ENCODE measurements at regions of chr5 and their contacts with region 1.

Region 1: DNA sequence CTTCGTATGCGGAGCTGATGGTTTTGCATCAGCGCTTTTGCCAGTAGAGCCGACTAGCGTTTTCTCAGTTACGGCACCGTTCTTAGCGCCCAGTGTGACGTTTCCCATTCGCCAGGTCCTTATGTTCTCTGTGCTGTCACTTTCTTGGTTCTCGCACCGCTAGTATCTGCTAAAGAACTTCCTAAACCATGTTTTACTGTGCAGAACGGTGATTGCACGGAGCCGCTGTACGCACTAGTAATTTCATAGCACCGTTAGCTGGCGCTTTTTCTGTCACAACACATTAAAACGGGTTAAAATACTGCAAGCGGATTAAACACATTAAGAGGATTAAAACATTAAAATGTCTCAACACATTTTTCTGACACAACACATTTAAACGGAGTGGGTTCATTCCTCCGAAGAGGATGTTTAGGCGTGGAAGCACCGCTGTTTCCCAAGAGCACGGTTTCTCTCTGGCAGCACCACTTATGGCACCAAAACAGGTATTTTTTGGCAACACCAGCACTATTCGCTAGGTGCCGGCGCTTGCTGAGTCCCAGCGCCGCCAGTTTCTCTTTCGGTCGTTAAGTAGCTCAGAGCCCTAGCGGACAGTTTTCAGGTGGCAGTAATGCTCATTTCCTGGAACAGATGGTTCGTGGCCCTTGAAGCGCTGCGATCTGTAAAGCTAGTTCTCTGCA is 20.4 kb downstream of the ANXA2R start:
- DNase-seq: peak; percentile 79 to 83
- H3K4me3 ChIP-seq: peak overlapping the region; percentile 74
- H3K4me3 Mint-ChIP-seq: peak overlapping the region; percentile 95
- H3K27ac Mint-ChIP-seq: peak overlapping the region; percentile 89
- H3K4me1 ChIP-seq: no peaks in the 10 kb centered on the region
- H3K4me1 Mint-ChIP-seq: peaks cover 15% of the 10 kb centered on the region
- H3K27me3 ChIP-seq: no peaks in the 10 kb centered on the region
- H3K27me3 Mint-ChIP-seq: no peaks in the 10 kb centered on the region
- CTCF ChIP-seq: peak; percentile 47 to 73

Region 2: GRCh38 chr5:42811591-42812446 is 207.9 kb before region 1 on chr5 and contains the start of gene SELENOP:
- CTCF ChIA-PET with region 1: no interaction called
- POLR2A ChIA-PET with region 1: interaction called, 3 read pairs
- intact Hi-C with region 1: loop called (anchors 10 kb)
- DNase-seq: peak; percentile 76 to 83
- H3K4me3 ChIP-seq: peak within 1 kb of the TSS; percentile 45
- H3K4me3 Mint-ChIP-seq: peak within 1 kb of the TSS; percentile 75
- H3K27ac Mint-ChIP-seq: peak within 1 kb of the TSS; percentile 82
- H3K4me1 ChIP-seq: peaks cover 25% of the 10 kb centered on the region
- H3K4me1 Mint-ChIP-seq: peaks cover 30% of the 10 kb centered on the region
- H3K27me3 ChIP-seq: no peaks in the 10 kb centered on the region
- H3K27me3 Mint-ChIP-seq: no peaks in the 10 kb centered on the region
- CTCF ChIP-seq: no peak
- total RNA-seq, gene SELENOP: 114 and 153 TPM in 2 replicates

Region 3: GRCh38 chr5:42908509-42909488 is 111.0 kb before region 1 on chr5:
- CTCF ChIA-PET with region 1: interaction called, 23 read pairs
- POLR2A ChIA-PET with region 1: interaction called, 3 read pairs
- intact Hi-C with region 1: loop called (anchors 2 kb)
- DNase-seq: peak; percentile 89 to 90
- H3K4me3 ChIP-seq: peak overlapping the region; percentile 38
- H3K4me3 Mint-ChIP-seq: peak overlapping the region; percentile 97
- H3K27ac Mint-ChIP-seq: peak overlapping the region; percentile 64
- H3K4me1 ChIP-seq: peaks cover 5% of the 10 kb centered on the region; the same call in 1 of the 2 replicates
- H3K4me1 Mint-ChIP-seq: no peaks in the 10 kb centered on the region
- H3K27me3 ChIP-seq: no peaks in the 10 kb centered on the region
- H3K27me3 Mint-ChIP-seq: peaks cover 5% of the 10 kb centered on the region
- CTCF ChIP-seq: peak; percentile 82 to 88

Region 4: GRCh38 chr5:43008369-43009153 is 11.2 kb before region 1 on chr5:
- CTCF ChIA-PET with region 1: interaction called, 10 read pairs
- POLR2A ChIA-PET with region 1: interaction called, 15 read pairs
- intact Hi-C with region 1: loop called (anchors 1 kb)
- DNase-seq: peak; percentile 94 to 95
- H3K4me3 ChIP-seq: peak overlapping the region; percentile 68
- H3K4me3 Mint-ChIP-seq: peak overlapping the region; percentile 94
- H3K27ac Mint-ChIP-seq: peak overlapping the region; percentile 97
- H3K4me1 ChIP-seq: no peaks in the 10 kb centered on the region; the same call in 1 of the 2 replicates
- H3K4me1 Mint-ChIP-seq: peaks cover 14% of the 10 kb centered on the region
- H3K27me3 ChIP-seq: no peaks in the 10 kb centered on the region
- H3K27me3 Mint-ChIP-seq: peaks cover 3% of the 10 kb centered on the region
- CTCF ChIP-seq: peak in 1 of 2 experiments; percentile 42

Region 5: DNA sequence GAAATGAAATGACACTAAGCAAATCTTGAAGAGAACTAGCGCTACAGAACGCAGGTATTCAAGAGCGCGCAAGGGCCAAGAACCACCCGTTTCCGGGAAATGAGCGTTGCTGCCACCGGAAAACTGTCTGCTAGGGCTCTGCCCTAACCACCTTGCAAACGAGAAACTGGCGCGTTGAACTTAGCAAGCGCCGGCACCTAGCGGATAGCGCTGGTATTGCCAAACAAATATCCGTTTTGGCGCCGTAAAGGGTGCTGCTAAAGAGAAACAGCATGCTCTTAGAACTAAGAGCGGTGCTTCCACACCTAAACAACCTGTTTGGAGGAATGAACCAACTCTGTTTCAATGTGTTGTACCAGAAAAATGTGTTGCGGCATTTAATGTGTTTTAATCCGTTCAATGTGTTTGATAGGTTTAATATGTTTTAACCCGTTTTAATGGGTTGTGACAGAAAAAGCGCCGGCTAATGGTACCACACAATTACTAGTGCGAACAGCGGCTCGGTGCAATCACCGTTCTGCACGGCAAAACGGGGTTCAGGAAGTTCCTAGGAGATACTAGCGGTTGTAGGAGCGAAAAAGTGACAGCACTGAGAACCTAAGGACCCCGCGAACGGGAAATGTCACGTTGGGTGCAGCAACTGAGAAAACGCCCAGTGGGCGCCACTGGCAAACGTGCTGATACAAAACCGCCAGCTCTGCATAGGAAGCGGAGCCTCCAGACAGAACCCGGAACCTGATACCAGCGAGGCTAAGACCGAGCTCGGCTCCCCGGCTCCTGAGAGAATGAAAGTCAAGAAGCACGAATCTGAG is 20.7 kb after region 1 on chr5 and contains the start of gene ANXA2R:
- CTCF ChIA-PET with region 1: interaction called, 17 read pairs
- POLR2A ChIA-PET with region 1: interaction called, 8 read pairs
- intact Hi-C with region 1: loop called (anchors 1 kb)
- DNase-seq: peak; percentile 92 to 93
- H3K4me3 ChIP-seq: peak within 1 kb of the TSS; percentile 80
- H3K4me3 Mint-ChIP-seq: peak within 1 kb of the TSS; percentile 86
- H3K27ac Mint-ChIP-seq: peak within 1 kb of the TSS; percentile 58
- H3K4me1 ChIP-seq: no peaks in the 10 kb centered on the region
- H3K4me1 Mint-ChIP-seq: no peaks in the 10 kb centered on the region
- H3K27me3 ChIP-seq: no peaks in the 10 kb centered on the region
- H3K27me3 Mint-ChIP-seq: no peaks in the 10 kb centered on the region
- CTCF ChIP-seq: peak; percentile 87 to 88
- total RNA-seq, gene ANXA2R: 3.1 and 4.1 TPM in 2 replicates

Region 6: GRCh38 chr5:43066799-43067741 is 47.3 kb after region 1 on chr5:
- CTCF ChIA-PET with region 1: interaction called, 6 read pairs
- POLR2A ChIA-PET with region 1: interaction called, 3 read pairs
- intact Hi-C with region 1: loop called (anchors 1 kb)
- DNase-seq: peak; percentile 89 to 90
- H3K4me3 ChIP-seq: peak overlapping the region; percentile 57
- H3K4me3 Mint-ChIP-seq: peak overlapping the region; percentile 88
- H3K27ac Mint-ChIP-seq: peak overlapping the region; percentile 86
- H3K4me1 ChIP-seq: peaks cover 20% of the 10 kb centered on the region
- H3K4me1 Mint-ChIP-seq: peaks cover 19% of the 10 kb centered on the region
- H3K27me3 ChIP-seq: no peaks in the 10 kb centered on the region
- H3K27me3 Mint-ChIP-seq: no peaks in the 10 kb centered on the region
- CTCF ChIP-seq: no peak

Region 7: DNA sequence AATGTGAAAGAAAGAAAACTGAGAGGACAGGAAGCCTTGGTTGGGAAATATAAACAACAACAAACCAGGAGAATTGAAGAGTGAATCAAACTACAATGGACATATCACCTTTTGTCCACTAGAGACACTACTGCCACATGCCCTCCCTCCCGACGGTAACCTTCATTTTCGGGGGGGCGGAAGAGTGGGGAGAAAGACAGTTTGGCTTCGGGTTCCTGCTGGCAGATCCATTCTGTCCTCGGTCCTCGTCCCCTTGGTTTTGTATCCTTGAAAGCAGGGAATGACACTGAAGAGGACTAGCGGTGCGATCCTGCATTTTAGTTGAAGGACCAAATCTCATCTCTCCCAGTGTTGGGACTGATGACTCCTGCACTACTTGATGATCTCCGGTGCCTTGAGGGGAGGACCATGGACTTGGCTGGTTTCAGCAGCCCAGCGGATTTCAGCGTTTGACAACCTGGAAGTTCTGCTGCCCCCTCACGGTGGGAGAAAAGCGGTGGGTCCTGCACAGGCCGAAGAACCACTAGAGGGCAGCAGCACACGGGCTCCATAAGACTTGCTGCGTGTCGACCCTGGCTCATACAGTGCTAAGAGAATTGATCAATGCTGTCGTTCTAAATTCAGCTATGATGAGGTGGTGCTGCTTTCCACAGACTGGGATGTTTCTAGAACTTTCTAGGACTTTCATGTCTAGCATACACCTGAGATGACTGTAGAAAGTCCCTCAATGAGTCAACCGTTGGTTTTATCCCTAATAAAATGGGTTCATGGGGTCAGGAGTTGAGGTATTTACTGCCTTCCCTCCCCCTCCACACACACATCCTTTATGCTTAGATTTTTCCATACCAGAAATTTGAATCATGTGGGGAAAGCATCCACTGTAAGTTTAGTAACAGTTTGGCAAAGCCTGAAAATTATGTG is 85.9 kb after region 1 on chr5:
- CTCF ChIA-PET with region 1: no interaction called
- POLR2A ChIA-PET with region 1: no interaction called
- intact Hi-C with region 1: loop called (anchors 1 kb)
- DNase-seq: peak; percentile 93
- H3K4me3 ChIP-seq: peak overlapping the region; percentile 21
- H3K4me3 Mint-ChIP-seq: peak overlapping the region; percentile 68
- H3K27ac Mint-ChIP-seq: peak overlapping the region; percentile 49
- H3K4me1 ChIP-seq: peaks cover 8% of the 10 kb centered on the region; the same call in 1 of the 2 replicates
- H3K4me1 Mint-ChIP-seq: peaks cover 8% of the 10 kb centered on the region
- H3K27me3 ChIP-seq: no peaks in the 10 kb centered on the region
- H3K27me3 Mint-ChIP-seq: no peaks in the 10 kb centered on the region
- CTCF ChIP-seq: peak; percentile 99 to 100

Region 8: DNA sequence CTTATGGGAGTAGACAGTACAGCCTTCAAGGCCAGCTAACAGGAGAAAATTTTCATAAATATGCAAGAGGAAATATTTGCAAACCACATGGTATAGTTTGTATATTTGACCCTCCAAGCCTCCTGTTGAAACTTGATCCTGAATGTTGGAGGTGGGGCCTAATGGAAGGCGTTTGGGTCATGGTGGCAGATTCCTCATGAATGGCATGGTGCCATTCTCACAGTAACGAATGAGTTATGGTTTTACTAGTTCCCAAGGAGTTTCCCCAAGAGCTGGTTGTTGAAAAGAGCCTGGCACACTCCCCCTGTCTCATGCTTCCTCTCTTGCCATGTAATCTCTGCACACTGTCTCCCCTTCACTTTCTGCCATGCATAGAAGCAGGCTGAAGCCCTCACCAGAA is 540.4 kb after region 1 on chr5:
- CTCF ChIA-PET with region 1: no interaction called
- POLR2A ChIA-PET with region 1: no interaction called
- intact Hi-C with region 1: no loop called
- DNase-seq: no peak
- H3K4me3 ChIP-seq: no peak overlapping the region
- H3K4me3 Mint-ChIP-seq: no peak overlapping the region
- H3K27ac Mint-ChIP-seq: no peak overlapping the region
- H3K4me1 ChIP-seq: no peaks in the 10 kb centered on the region
- H3K4me1 Mint-ChIP-seq: no peaks in the 10 kb centered on the region
- H3K27me3 ChIP-seq: no peaks in the 10 kb centered on the region; the same call in 1 of the 2 replicates
- H3K27me3 Mint-ChIP-seq: no peaks in the 10 kb centered on the region
- CTCF ChIP-seq: no peak